WTC11 (cell line): ENCODE measurements at regions of chr22 and their contacts with region 1.

Region 1: DNA sequence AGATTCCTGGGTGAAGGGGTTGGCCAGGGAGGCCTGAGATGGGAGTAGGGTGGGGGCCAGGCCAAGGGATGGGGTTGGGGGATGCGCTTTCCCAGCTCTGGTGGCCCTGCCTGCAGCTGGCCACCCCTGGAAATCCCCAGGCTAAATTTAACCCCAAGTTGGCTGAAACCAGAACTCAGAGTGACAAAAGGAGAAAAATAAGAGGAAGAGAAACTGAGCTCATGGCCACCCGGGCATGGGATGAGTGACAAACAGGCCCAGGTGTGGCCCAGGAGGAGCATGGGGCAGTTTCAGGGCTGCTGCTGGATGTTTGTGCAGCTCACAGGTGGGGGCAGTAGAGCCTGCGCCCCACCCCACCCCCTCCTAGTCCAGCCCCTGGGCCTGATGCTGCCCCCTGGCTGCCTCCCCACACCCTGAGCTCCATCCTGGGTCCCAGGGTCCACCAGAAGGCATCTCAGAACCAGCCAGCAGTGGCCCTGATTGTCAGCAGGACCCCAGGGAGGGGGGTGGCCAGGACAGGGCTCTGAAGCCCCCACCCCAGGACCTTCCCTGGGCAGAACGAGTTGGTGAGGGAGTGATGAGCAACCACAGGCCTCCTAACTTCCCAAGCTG is 48.0 kb downstream of the IGLL5 start:
- DNase-seq: peak; percentile 33
- ATAC-seq: peak; percentile 81
- H3K4me3 Mint-ChIP-seq: no peak overlapping the region
- H3K27ac Mint-ChIP-seq: no peak overlapping the region
- H3K4me1 Mint-ChIP-seq: peaks cover 5% of the 10 kb centered on the region
- H3K27me3 Mint-ChIP-seq: peaks cover 47% of the 10 kb centered on the region
- CTCF ChIP-seq: no peak

Region 2: GRCh38 chr22:22903355-22903777 is 32.3 kb before region 1 on chr22:
- CTCF ChIA-PET with region 1: interaction called, 10 read pairs
- POLR2A ChIA-PET with region 1: no interaction called
- DNase-seq: no peak
- ATAC-seq: no peak
- H3K4me3 Mint-ChIP-seq: no peak overlapping the region
- H3K27ac Mint-ChIP-seq: no peak overlapping the region
- H3K4me1 Mint-ChIP-seq: no peaks in the 10 kb centered on the region
- H3K27me3 Mint-ChIP-seq: peaks cover 63% of the 10 kb centered on the region
- CTCF ChIP-seq: no peak